PC-3 (cell line): ENCODE measurements at regions of chr5 and their contacts with region 1.

Region 1: DNA sequence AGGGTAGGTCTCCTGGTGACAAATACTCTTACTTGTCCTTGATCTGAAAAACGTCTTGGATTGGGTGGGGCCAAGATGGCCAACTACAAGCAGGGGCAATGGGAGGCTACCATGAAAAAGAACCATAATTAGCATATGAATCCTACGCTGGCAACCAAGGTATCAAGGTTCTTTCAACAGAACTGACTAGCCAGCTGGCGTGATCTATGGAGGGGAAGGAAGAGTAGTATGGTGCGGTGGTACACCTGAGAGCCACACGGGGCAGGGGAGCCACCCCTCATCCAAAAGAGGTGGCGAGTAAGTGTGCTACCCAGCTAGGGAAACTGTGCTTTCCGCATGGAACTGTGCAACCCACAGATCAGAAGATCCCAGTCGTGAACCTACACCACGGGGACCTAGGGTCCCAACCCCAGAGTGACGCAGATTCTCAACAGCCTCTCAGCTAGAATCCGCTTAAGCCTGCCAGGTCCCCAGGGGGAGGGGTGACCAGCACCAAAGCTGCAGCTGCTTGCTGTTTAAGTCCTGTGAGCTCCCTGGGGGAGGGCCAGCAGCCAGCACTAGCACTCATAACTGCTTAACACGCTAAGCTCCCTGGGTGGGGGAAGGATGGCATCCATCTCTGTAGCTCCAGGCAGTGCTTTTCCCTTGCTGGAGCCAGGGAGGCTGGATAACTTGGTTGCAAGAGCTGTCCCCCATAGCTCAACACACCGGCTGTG is 334.8 kb downstream of the FBXL17 start:
- DNase-seq: no peak
- ATAC-seq: no peak
- H3K4me3 ChIP-seq: no peak overlapping the region
- H3K27ac ChIP-seq: no peak overlapping the region
- H3K4me1 ChIP-seq: no peaks in the 10 kb centered on the region
- H3K27me3 ChIP-seq: no peaks in the 10 kb centered on the region
- CTCF ChIP-seq: no peak

Region 2: DNA sequence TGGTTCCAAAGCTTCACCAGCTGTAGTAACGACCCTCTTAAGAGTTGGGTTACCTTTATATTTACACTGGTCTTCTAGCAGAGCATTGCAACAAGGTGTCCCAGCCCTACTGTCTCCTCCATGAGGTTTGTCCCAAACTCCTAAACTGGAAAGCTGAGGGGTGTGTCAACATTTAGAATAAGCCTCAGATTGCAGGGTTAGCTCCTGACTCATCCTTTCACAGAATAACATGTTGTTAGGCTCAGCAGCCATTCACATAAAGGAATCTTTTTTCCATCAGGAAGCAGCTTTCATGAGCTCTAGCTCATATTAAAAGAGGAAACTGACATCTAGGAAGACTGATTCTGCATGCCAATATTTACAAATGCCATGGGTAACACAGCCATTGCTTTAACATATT is 615.1 kb before region 1 on chr5:
- CTCF ChIA-PET with region 1: no interaction called
- POLR2A ChIA-PET with region 1: no interaction called
- intact Hi-C with region 1: no loop called
- DNase-seq: peak; percentile 66
- ATAC-seq: peak; percentile 68
- H3K4me3 ChIP-seq: no peak overlapping the region
- H3K27ac ChIP-seq: peak overlapping the region; percentile 17; the same call in 1 of the 2 replicates
- H3K4me1 ChIP-seq: peaks cover 18% of the 10 kb centered on the region
- H3K27me3 ChIP-seq: no peaks in the 10 kb centered on the region
- CTCF ChIP-seq: no peak

Region 3: GRCh38 chr5:108024986-108025385 is 22.1 kb before region 1 on chr5:
- CTCF ChIA-PET with region 1: no interaction called
- POLR2A ChIA-PET with region 1: no interaction called
- intact Hi-C with region 1: no loop called
- DNase-seq: no peak
- ATAC-seq: no peak
- H3K4me3 ChIP-seq: no peak overlapping the region
- H3K27ac ChIP-seq: no peak overlapping the region
- H3K4me1 ChIP-seq: no peaks in the 10 kb centered on the region
- H3K27me3 ChIP-seq: no peaks in the 10 kb centered on the region
- CTCF ChIP-seq: no peak

Region 4: DNA sequence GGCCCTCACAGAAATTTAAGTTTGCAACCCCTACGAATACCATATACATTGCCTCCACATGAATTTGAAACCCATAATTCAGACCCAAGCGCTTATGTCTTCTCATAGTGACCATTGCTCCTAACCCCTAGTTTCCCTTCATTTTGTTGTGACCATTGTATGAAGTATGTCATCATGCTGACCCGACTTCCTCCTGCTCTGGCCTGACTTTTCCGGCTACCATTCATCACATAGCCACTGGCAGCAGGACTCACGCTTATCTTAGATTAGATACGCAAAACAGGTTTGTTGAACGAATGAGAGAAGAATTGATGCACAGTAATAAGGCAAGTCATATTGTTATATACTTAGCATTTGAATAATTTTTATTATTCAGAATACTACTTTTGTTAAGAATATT is 10.6 kb before region 1 on chr5:
- CTCF ChIA-PET with region 1: no interaction called
- POLR2A ChIA-PET with region 1: no interaction called
- intact Hi-C with region 1: loop called (anchors 1 kb)
- DNase-seq: no peak
- ATAC-seq: no peak
- H3K4me3 ChIP-seq: no peak overlapping the region
- H3K27ac ChIP-seq: no peak overlapping the region
- H3K4me1 ChIP-seq: no peaks in the 10 kb centered on the region
- H3K27me3 ChIP-seq: no peaks in the 10 kb centered on the region
- CTCF ChIP-seq: no peak

Region 5: GRCh38 chr5:108560581-108560980 is 513.5 kb after region 1 on chr5:
- CTCF ChIA-PET with region 1: no interaction called
- POLR2A ChIA-PET with region 1: no interaction called
- intact Hi-C with region 1: no loop called
- DNase-seq: peak; percentile 15
- ATAC-seq: peak; percentile 22
- H3K4me3 ChIP-seq: no peak overlapping the region
- H3K27ac ChIP-seq: no peak overlapping the region
- H3K4me1 ChIP-seq: no peaks in the 10 kb centered on the region
- H3K27me3 ChIP-seq: no peaks in the 10 kb centered on the region; the same call in 1 of the 2 replicates
- CTCF ChIP-seq: no peak